ENCODE measurements at regions of chr15 and their contacts with region 1.

Region 1: DNA sequence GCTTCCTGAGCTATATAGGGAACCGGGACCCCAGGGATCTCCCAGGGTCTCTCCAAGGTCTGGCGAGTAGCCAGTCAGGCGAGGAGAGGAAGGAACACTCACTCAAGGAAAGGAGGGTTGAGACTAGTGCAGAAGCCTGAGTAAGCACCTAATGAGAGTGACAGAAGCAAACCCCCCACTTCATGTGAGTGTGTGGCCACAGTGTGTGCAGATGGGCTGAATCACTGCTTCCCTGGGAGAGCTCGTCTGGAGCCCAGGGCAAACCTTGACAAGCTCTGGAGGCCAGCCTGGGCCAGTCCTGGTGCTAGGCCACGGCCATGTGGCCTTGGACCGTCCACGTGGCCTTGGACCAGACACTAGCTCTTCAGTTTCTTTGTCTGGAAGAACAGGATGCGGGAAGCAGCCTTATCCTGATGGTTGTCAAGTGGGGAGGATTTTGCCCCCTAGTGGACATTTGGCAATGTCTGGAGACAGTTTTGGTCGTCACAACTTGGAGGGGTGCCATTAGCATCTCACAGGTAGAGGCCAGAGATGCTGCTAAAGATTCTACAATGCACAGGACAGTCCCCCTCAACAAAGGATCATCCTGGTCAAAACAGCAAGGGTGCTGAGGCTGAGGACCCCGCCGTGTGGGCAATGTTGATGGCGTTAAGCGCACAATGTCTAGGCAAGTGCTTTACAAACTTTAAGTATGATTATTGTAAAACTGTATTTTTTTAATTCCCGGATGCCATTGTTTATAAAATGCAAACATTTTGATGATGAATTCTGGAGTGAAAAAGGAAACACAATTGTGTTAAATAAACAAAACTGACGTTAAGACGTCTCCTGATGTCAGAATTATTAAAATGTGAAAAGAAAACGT is 34.8 kb upstream of the CTSH start:
- DNase-seq: peak; percentile 71
- H3K4me3 ChIP-seq: no peak overlapping the region
- H3K27ac ChIP-seq: no peak overlapping the region
- H3K4me1 ChIP-seq: no peaks in the 10 kb centered on the region
- H3K27me3 ChIP-seq: no peaks in the 10 kb centered on the region
- CTCF ChIP-seq: peak; percentile 72

Region 2: GRCh38 chr15:78880242-78880533 is 99.5 kb before region 1 on chr15:
- intact Hi-C with region 1: no loop called
- DNase-seq: no peak
- H3K4me3 ChIP-seq: no peak overlapping the region
- H3K27ac ChIP-seq: no peak overlapping the region
- H3K4me1 ChIP-seq: peaks cover 4% of the 10 kb centered on the region
- H3K27me3 ChIP-seq: no peaks in the 10 kb centered on the region
- CTCF ChIP-seq: no peak

Region 3: GRCh38 chr15:78909791-78910228 is 69.9 kb before region 1 on chr15:
- intact Hi-C with region 1: loop called (anchors 5 kb)
- DNase-seq: peak; percentile 48
- H3K4me3 ChIP-seq: no peak overlapping the region
- H3K27ac ChIP-seq: no peak overlapping the region
- H3K4me1 ChIP-seq: no peaks in the 10 kb centered on the region
- H3K27me3 ChIP-seq: no peaks in the 10 kb centered on the region
- CTCF ChIP-seq: peak; percentile 49

Measured in colonic mucosa (tissue), 4 donors.